Aorta (tissue), 5 donors: ENCODE measurements at regions of chr16 and their contacts with region 1.

Region 1: GRCh38 chr16:31713071-31713944 is 160.3 kb upstream of the ZNF267 start:
- DNase-seq: peak; percentile 95 to 97
- ATAC-seq: peak; percentile 92
- H3K4me3 ChIP-seq: peak overlapping the region; percentile 80 to 96
- H3K27ac ChIP-seq: peak overlapping the region; percentile 62 to 98
- H3K4me1 ChIP-seq: no peaks in the 10 kb centered on the region
- H3K27me3 ChIP-seq: no peaks in the 10 kb centered on the region

Region 2: GRCh38 chr16:31873556-31874365 is 160.5 kb after region 1 on chr16 and contains the start of gene ZNF267:
- intact Hi-C with region 1: loop called in 1 of 2 experiments (anchors 5 kb)
- DNase-seq: peak; percentile 96 to 97
- ATAC-seq: peak; percentile 96
- H3K4me3 ChIP-seq: peak within 1 kb of the TSS; percentile 94 to 99
- H3K27ac ChIP-seq: peak within 1 kb of the TSS; percentile 23 to 90
- H3K4me1 ChIP-seq: no peaks in the 10 kb centered on the region
- H3K27me3 ChIP-seq: no peaks in the 10 kb centered on the region
- total RNA-seq, gene ZNF267: 17.4 to 17.7 TPM